Mammary epithelial cell (primary cell): ENCODE measurements at regions of chr1 and their contacts with region 1.

Region 1: GRCh38 chr1:77991638-77992037 is 12.8 kb upstream of the FUBP1 start:
- DNase-seq: peak; percentile 72
- H3K4me3 ChIP-seq: no peak overlapping the region
- H3K27ac ChIP-seq: peak overlapping the region; percentile 60
- H3K4me1 ChIP-seq: peaks cover 9% of the 10 kb centered on the region
- H3K27me3 ChIP-seq: no peaks in the 10 kb centered on the region
- CTCF ChIP-seq: no peak

Region 2: DNA sequence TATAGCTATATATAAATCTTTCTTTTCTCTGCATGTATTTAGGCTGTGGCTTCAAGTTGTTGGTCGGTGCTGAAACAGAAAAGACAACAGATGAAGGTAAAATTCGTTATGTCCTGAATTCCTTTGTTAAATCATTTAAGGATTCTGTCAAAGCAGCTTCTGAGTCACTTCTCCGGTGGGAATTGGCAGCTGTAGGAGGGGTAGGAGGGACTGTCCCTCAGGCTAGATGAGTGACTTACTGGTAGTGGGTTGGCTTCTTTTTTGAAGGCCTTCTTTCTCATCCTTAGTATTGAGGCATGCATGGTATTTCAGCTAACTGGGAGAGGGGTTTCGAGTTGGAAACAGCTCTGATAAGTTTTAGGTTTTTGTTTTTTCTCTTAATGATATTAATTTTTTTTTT is 125.3 kb before region 1 on chr1:
- CTCF ChIA-PET with region 1: no interaction called
- dilution Hi-C with region 1: no loop called
- in situ Hi-C with region 1: no loop called
- intact Hi-C with region 1: no loop called
- DNase-seq: peak; percentile 11
- H3K4me3 ChIP-seq: no peak overlapping the region
- H3K27ac ChIP-seq: no peak overlapping the region
- H3K4me1 ChIP-seq: no peaks in the 10 kb centered on the region
- H3K27me3 ChIP-seq: no peaks in the 10 kb centered on the region
- CTCF ChIP-seq: no peak

Region 3: GRCh38 chr1:78045926-78046778 is 54.5 kb after region 1 on chr1 and contains the start of gene GIPC2:
- CTCF ChIA-PET with region 1: no interaction called
- dilution Hi-C with region 1: no loop called
- in situ Hi-C with region 1: no loop called
- intact Hi-C with region 1: no loop called
- DNase-seq: no peak
- H3K4me3 ChIP-seq: peak within 1 kb of the TSS; percentile 6 to 38 (median 7)
- H3K27ac ChIP-seq: no peak within 1 kb of the TSS
- H3K4me1 ChIP-seq: peaks cover 7% of the 10 kb centered on the region
- H3K27me3 ChIP-seq: peaks cover 16% of the 10 kb centered on the region
- CTCF ChIP-seq: no peak
- total RNA-seq, gene GIPC2: under 0.01 TPM in 1 of 2 donors, not detected in the other

Region 4: DNA sequence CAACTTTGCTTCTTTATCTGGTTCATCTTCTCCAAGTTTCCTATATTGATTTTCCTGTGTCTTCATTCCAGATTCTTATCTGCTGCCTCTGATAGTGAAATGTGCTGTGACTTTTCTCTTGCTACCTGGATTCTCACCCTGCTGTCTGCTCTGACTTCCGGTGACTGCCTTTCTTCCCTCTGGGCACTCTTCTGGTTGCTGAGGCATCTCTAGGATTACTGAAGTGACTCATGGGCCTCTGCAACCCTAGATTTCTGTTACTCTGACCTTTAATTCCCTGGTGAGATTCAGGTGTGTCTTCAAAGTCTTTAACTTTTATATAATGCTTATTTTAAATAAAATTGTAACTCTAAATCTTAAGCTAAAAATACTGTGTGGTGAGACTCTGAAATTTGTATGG is 101.0 kb after region 1 on chr1:
- CTCF ChIA-PET with region 1: no interaction called
- dilution Hi-C with region 1: loop called (anchors 5 kb)
- in situ Hi-C with region 1: no loop called
- intact Hi-C with region 1: no loop called
- DNase-seq: peak; percentile 83
- H3K4me3 ChIP-seq: no peak overlapping the region
- H3K27ac ChIP-seq: no peak overlapping the region
- H3K4me1 ChIP-seq: peaks cover 43% of the 10 kb centered on the region
- H3K27me3 ChIP-seq: no peaks in the 10 kb centered on the region
- CTCF ChIP-seq: no peak